ENCODE measurements at regions of chr2 and their contacts with region 1.

Region 1: DNA sequence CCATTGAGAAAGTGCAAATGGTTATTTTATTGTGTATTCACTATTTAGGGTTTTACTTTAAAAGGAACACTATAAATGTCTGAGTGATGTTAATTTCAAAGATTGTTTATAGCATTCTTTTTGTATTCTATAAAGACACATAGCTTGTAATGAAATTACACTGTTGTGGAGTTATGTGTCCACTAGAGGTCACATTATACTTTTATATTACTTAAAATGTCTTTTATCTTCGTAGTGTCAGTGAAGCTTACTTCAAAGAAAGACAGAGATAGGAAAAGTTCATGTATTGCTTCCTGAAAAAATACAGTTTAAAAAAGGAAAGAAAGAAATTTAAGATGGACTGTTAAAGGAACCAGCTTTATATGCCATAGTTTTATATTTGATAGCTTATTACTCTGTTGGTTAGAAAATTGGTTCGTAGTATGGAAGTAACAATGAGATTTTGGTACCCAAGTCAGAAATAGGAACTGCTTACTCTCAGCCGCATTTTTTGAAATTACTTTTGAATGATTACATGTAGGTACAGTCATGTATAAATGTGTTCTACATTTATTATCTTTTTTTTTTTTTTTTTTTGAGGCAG is 20.5 kb downstream of the APLF start:
- DNase-seq: peak in 4 of 9 donors; percentile 22 to 38 (median 28)
- ATAC-seq: peak; percentile 72
- H3K4me3 ChIP-seq: no peak overlapping the region
- H3K4me3 Mint-ChIP-seq: no peak overlapping the region
- H3K27ac ChIP-seq: no peak overlapping the region
- H3K27ac Mint-ChIP-seq: no peak overlapping the region
- H3K4me1 ChIP-seq: no peaks in the 10 kb centered on the region
- H3K4me1 Mint-ChIP-seq: peaks cover 0 to 5% (median 2%) of the 10 kb centered on the region in 7 donors
- H3K27me3 ChIP-seq: no peaks in the 10 kb centered on the region
- H3K27me3 Mint-ChIP-seq: no peaks in the 10 kb centered on the region

Region 2: GRCh38 chr2:68594674-68595492 is 107.0 kb after region 1 on chr2:
- CTCF ChIA-PET with region 1: interaction called, 17 read pairs
- POLR2A ChIA-PET with region 1: no interaction called
- intact Hi-C with region 1: loop called (anchors 1 kb)
- DNase-seq: peak; percentile 5 to 46 (median 39)
- ATAC-seq: peak; percentile 74
- H3K4me3 ChIP-seq: no peak overlapping the region
- H3K4me3 Mint-ChIP-seq: peak overlapping the region in 3 of 10 donors; percentile 2 to 23 (median 4)
- H3K27ac ChIP-seq: no peak overlapping the region
- H3K27ac Mint-ChIP-seq: peak overlapping the region in 2 of 9 donors; percentile 1 to 5
- H3K4me1 ChIP-seq: no peaks in the 10 kb centered on the region
- H3K4me1 Mint-ChIP-seq: peaks cover 3 to 10% (median 7%) of the 10 kb centered on the region in 7 donors
- H3K27me3 ChIP-seq: no peaks in the 10 kb centered on the region
- H3K27me3 Mint-ChIP-seq: peaks cover 3 to 25% (median 16%) of the 10 kb centered on the region in 5 donors